ENCODE measurements at regions of chr1 and their contacts with region 1.

Region 1: GRCh38 chr1:156524481-156524869 is 23.9 kb upstream of the MEF2D start:
- DNase-seq: peak; percentile 63
- ATAC-seq: peak; percentile 81
- H3K4me3 Mint-ChIP-seq: peak overlapping the region; percentile 14
- H3K27ac Mint-ChIP-seq: peak overlapping the region; percentile 86
- H3K4me1 Mint-ChIP-seq: peaks cover 44% of the 10 kb centered on the region
- H3K27me3 Mint-ChIP-seq: no peaks in the 10 kb centered on the region

Region 2: DNA sequence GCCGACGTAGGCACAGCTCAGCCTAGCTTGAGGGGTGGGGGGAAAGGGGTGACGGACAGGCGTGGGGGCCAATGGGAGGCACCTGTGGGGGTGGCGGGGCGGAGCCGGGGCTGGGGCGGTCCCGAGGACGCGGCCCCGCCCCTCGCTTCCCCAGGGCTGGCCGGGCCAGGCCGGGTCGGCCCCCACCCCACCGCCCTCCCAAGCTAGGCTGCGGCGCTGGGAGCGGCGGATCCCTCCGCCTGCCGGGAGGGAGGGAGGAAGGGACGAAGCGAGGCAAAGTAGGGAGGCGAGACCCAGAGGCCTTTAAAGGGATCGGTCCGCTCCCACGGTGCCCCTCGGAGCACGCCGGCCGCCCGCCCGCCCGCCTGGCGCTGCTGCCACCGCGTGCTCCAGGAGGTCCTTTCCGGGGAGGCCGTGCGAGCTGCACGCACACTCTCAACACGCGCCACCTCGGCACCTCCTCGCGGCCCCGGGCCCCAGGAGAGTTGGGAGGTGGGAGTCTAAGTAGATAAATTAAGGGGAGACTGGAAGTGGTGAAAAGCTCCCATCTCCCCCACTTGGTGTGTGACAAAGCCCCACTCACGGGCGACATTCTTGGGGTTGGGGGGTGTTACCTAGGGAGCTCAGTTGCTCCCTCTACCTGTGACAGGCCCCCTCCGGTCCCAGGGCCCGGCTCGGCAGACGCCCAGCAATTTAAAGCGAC is 23.5 kb before region 1 on chr1:
- CTCF ChIA-PET with region 1: interaction called, 17 read pairs
- DNase-seq: peak; percentile 95
- ATAC-seq: peak; percentile 72
- H3K4me3 Mint-ChIP-seq: peak overlapping the region; percentile 88
- H3K27ac Mint-ChIP-seq: peak overlapping the region; percentile 97
- H3K4me1 Mint-ChIP-seq: peaks cover 74% of the 10 kb centered on the region
- H3K27me3 Mint-ChIP-seq: no peaks in the 10 kb centered on the region

Region 3: GRCh38 chr1:156508163-156508887 is 16.1 kb before region 1 on chr1:
- CTCF ChIA-PET with region 1: interaction called, 11 read pairs
- DNase-seq: no peak
- ATAC-seq: no peak
- H3K4me3 Mint-ChIP-seq: peak overlapping the region; percentile 77
- H3K27ac Mint-ChIP-seq: peak overlapping the region; percentile 85
- H3K4me1 Mint-ChIP-seq: peaks cover 67% of the 10 kb centered on the region
- H3K27me3 Mint-ChIP-seq: no peaks in the 10 kb centered on the region

Measured in activated CD8-positive, alpha-beta memory T cell treated with anti-CD3 and anti-CD28 coated beads, Interleukin-2, amount 10 ng/mL, durations not matched to agents 7 days and 5 days (primary cell).